MCF 10A (cell line): ENCODE measurements at regions of chr19 and their contacts with region 1.

Region 1: DNA sequence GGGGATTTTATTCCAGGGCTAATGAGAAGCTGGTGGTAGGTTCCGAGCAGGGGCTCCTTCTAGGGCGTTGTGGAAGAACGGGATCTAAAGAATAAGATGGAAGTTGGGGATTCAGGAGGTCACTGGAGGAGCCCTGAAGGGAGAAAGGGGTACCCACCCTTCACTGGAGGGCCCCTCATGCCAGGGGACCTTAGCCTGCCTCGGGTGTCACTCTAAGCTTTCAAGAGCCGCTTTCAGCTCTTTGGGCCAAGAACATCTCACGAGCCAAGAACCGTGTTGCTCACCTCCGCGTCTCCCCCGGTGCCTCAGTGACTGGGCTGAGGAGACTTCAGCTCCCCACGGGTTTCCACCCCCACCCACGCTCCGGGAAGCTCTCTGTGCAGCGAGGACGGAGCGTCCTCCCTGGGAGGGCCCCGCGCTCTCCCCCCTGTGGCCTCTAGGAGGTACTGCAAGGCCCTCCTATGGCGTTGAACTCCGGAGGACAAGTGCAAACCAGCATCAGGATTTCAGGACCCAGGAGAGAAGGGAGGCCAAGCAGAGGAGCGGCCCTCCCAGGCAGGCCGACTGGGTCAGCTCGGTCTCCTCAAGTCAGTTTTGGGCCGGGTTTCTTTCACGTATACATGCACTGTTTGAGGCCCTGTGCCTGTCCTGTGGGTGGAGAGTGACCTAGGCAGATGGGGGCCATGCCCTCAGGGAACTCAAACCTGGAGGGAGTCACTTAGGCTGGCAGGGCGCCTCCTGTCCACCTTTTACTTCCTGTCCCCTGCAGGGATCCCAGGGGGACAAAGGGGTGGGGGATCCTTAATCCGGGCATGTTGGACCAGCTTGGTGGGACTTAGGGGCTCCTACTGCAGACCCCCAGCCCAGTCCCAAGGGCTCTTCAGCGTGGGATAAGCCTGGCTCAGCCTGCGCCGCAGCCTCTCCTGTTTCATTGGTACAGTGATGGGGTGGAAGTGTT is 5.1 kb upstream of the KRTDAP start:
- DNase-seq: peak; percentile 72
- H3K4me3 Mint-ChIP-seq: peak overlapping the region; percentile 49
- H3K27ac Mint-ChIP-seq: no peak overlapping the region
- H3K4me1 Mint-ChIP-seq: no peaks in the 10 kb centered on the region
- H3K27me3 Mint-ChIP-seq: peaks cover 27% of the 10 kb centered on the region
- CTCF ChIP-seq: peak; percentile 89

Region 2: GRCh38 chr19:35352448-35353304 is 142.7 kb before region 1 on chr19:
- CTCF ChIA-PET with region 1: interaction called, 49 read pairs
- POLR2A ChIA-PET with region 1: interaction called, 6 read pairs
- intact Hi-C with region 1: loop called (anchors 1 kb)
- DNase-seq: peak; percentile 79
- H3K4me3 Mint-ChIP-seq: no peak overlapping the region
- H3K27ac Mint-ChIP-seq: no peak overlapping the region
- H3K4me1 Mint-ChIP-seq: peaks cover 4% of the 10 kb centered on the region
- H3K27me3 Mint-ChIP-seq: peaks cover 33% of the 10 kb centered on the region
- CTCF ChIP-seq: peak; percentile 79

Region 3: GRCh38 chr19:35357867-35358573 is 137.4 kb before region 1 on chr19 and contains the start of gene FFAR3:
- CTCF ChIA-PET with region 1: interaction called, 49 read pairs
- POLR2A ChIA-PET with region 1: interaction called, 6 read pairs
- intact Hi-C with region 1: no loop called
- DNase-seq: peak; percentile 30
- H3K4me3 Mint-ChIP-seq: no peak within 1 kb of the TSS
- H3K27ac Mint-ChIP-seq: no peak within 1 kb of the TSS
- H3K4me1 Mint-ChIP-seq: peaks cover 6% of the 10 kb centered on the region
- H3K27me3 Mint-ChIP-seq: peaks cover 61% of the 10 kb centered on the region
- CTCF ChIP-seq: no peak
- total RNA-seq, gene FFAR3: not detected in 2 replicates

Region 4: GRCh38 chr19:35478803-35479601 is 16.4 kb before region 1 on chr19:
- CTCF ChIA-PET with region 1: interaction called, 16 read pairs
- POLR2A ChIA-PET with region 1: no interaction called
- intact Hi-C with region 1: no loop called
- DNase-seq: no peak
- H3K4me3 Mint-ChIP-seq: no peak overlapping the region
- H3K27ac Mint-ChIP-seq: no peak overlapping the region
- H3K4me1 Mint-ChIP-seq: no peaks in the 10 kb centered on the region
- H3K27me3 Mint-ChIP-seq: peaks cover 16% of the 10 kb centered on the region
- CTCF ChIP-seq: no peak

Region 5: GRCh38 chr19:35484252-35485036 is 10.9 kb before region 1 on chr19:
- CTCF ChIA-PET with region 1: interaction called, 22 read pairs
- POLR2A ChIA-PET with region 1: no interaction called
- intact Hi-C with region 1: no loop called
- DNase-seq: no peak
- H3K4me3 Mint-ChIP-seq: no peak overlapping the region
- H3K27ac Mint-ChIP-seq: no peak overlapping the region
- H3K4me1 Mint-ChIP-seq: no peaks in the 10 kb centered on the region
- H3K27me3 Mint-ChIP-seq: peaks cover 55% of the 10 kb centered on the region
- CTCF ChIP-seq: no peak

Region 6: DNA sequence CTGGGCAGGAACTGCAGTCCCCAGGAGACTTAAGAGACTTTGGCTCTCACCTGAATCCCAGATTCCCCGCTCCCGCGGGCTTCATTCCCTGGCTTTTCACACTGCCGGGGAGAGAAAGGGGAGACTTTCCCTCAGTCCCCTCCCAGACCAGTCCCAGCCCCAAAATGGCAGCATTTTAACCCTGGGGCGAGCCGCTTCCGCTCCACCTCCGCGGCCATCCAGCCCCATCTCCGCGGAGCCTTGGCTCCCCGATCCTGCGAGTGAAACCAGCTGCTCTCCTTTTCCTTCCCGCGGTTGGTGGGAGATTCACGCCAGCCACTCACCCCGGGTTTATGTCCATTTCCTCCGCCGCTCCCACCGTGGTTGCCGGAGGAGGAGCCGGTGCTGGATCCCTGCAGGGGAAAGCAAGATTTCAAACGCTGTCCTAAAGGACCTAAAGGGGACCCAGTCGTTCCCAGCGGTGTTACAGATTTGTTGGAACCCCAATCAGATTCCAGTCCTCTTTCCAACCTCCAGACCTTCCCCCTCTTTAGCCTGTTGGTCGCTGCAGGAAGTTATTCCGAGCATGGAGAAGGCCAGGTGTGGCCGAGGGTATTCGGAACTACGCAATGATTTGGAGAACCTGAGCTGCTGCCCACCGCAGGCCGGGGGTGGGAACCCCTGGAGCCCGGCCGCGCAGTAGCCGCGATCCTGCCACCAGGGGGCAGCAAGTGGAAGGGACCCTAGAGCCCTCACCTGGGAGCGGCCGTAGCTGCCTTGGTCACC is 14.7 kb after region 1 on chr19:
- CTCF ChIA-PET with region 1: interaction called, 108 read pairs
- POLR2A ChIA-PET with region 1: interaction called, 4 read pairs
- intact Hi-C with region 1: no loop called
- DNase-seq: peak; percentile 88
- H3K4me3 Mint-ChIP-seq: peak overlapping the region; percentile 74
- H3K27ac Mint-ChIP-seq: peak overlapping the region; percentile 75
- H3K4me1 Mint-ChIP-seq: peaks cover 15% of the 10 kb centered on the region
- H3K27me3 Mint-ChIP-seq: no peaks in the 10 kb centered on the region
- CTCF ChIP-seq: peak; percentile 93